Activated T-helper 1 cell treated with anti-CD3 and anti-CD28 coated beads, Interleukin-12 subunit alpha, Interleukin-12 subunit beta, Interleukin-2, Interleukin-4 antibody, amounts not matched to agents 30 ng/mL and 10 ng/mL and 1 ng/mL, durations not matched to agents 14 hours and 24 hours and 36 hours (primary cell): ENCODE measurements at regions of chr16 and their contacts with region 1.

Region 1: GRCh38 chr16:71808593-71809459 is at the start of gene AP1G1:
- DNase-seq: peak; percentile 89
- H3K4me3 Mint-ChIP-seq: peak within 1 kb of the TSS; percentile 96
- H3K27ac Mint-ChIP-seq: peak within 1 kb of the TSS; percentile 100
- H3K4me1 Mint-ChIP-seq: peaks cover 21% of the 10 kb centered on the region
- H3K27me3 Mint-ChIP-seq: no peaks in the 10 kb centered on the region
- total RNA-seq, gene AP1G1: 85.5 and 90.7 TPM in 2 replicates

Region 2: DNA sequence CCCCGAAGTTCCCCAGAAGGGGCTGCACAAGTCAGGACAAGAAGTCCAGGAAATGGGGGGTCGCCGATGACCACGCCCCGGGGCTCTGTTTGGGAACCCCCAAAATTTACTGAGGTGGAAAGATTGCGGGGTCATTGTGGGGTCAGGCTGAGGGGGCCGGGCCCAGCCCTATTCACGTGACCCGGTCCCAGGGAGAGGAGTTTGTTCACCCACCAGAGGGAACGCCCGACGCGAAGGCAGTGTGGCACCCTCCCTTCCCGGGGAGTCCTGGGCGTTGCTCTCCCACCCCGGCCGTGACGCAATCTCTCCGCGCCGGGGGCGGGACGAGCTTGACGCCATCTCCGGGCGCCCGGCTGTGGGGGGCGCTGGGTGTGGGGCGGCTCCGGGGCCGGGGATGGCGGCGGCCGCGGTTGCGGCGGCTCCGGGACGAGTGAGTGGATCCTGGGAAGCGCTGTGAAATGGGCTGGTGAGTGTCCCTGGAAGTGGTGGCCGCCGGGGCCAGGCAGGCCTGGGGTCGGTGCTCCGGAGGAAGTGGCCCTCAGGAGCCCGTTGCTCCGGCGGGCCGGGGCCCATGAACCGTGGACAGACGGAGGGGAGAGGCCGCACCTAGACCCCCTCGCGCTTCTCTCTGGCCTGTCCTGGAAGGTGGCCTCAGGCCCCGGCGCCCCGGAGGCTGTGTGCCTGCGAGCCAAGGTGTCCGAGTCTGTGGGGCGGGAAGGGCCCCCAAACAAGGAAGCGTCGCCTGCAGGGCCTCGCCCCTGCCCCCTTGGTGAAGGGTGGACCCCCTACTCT is 37.0 kb after region 1 on chr16 and contains the start of gene ATXN1L:
- intact Hi-C with region 1: loop called (anchors 1 kb)
- DNase-seq: peak; percentile 94
- H3K4me3 Mint-ChIP-seq: peak within 1 kb of the TSS; percentile 93
- H3K27ac Mint-ChIP-seq: peak within 1 kb of the TSS; percentile 94
- H3K4me1 Mint-ChIP-seq: peaks cover 52% of the 10 kb centered on the region
- H3K27me3 Mint-ChIP-seq: no peaks in the 10 kb centered on the region
- total RNA-seq, gene ATXN1L: 20.1 and 20.6 TPM in 2 replicates

Region 3: DNA sequence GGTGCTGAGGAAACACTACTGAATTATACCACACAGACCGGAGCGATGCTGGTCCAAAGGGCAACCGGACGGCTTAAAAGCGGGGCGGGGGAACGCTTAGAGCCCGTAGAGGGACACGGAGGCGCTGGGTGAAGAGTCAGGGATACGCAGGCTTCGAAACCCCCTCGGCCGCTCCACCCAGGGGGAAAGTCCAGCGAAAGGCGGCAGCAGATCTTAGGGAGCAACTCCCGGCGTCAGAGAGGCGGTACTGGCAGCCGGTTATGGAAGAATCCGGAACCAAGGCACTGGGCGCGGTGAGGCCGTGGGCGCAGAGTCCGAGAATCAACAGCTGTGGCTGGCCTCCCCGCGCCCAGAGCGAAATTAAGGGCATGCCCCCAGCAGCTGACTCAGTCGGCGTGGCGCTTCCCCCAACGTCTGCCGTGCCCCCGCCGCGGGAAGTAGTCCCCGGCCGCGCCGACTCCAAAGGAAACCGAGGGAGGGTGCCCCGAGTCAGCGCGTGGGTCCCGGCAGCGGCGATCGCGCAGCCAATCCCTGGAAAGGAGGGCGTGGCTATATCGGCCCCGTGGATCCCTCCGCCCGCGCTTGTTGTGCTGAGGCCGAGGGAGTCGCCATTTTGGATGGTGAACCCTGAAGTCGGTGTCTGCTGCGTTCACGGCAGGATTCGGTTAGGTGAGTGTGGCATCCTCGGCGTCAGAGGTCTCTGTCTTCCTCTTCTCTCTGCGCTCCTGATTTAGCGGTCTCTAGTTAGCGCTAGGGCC is 86.3 kb after region 1 on chr16 and contains the start of gene IST1:
- intact Hi-C with region 1: loop called (anchors 1 kb)
- DNase-seq: peak; percentile 98
- H3K4me3 Mint-ChIP-seq: peak within 1 kb of the TSS; percentile 90
- H3K27ac Mint-ChIP-seq: peak within 1 kb of the TSS; percentile 91
- H3K4me1 Mint-ChIP-seq: peaks cover 12% of the 10 kb centered on the region
- H3K27me3 Mint-ChIP-seq: no peaks in the 10 kb centered on the region
- total RNA-seq, gene IST1: 156 and 169 TPM in 2 replicates

Region 4: DNA sequence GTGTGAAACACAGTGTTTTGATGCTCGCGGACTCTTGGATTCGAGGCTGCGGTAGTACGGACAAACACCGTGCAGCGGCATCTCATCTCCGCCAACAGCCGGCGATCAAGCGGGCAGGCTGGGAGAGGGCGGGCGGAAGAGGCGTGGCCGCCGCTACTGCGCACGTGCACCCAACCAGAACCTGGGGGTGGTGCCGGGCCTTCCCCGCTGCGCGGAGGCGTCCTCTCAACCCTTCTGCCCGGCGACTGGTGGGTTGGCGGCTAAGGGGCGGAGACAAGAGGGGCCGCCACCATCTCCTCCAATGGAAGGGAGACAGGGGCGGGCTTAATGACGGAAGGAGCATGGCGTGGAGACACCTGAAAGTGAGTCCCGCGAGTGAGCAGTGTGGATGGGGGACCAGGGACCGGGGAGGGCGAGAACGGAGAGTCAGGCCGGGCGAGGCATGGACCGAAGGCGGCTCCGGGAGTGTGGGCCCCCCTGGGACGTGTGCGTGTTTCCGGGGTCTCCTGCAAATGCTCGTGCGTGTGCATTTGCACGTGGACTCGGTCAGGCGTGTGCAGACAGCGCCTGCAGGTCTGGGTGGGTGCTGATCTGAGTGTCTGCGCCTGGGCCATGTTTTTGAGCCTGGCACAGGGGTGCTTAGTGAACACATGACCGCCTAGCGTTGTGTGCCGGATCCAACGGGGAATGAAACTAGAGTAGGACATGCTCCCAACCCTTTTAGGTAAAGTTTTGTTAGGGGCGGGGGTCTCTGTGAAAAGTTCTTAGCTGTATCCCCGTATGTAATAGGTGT is 199.8 kb after region 1 on chr16 and contains the start of gene DHODH:
- intact Hi-C with region 1: loop called (anchors 1 kb)
- DNase-seq: peak; percentile 98
- H3K4me3 Mint-ChIP-seq: peak within 1 kb of the TSS; percentile 99
- H3K27ac Mint-ChIP-seq: peak within 1 kb of the TSS; percentile 99
- H3K4me1 Mint-ChIP-seq: peaks cover 16% of the 10 kb centered on the region
- H3K27me3 Mint-ChIP-seq: no peaks in the 10 kb centered on the region
- total RNA-seq, gene DHODH: 31.0 and 33.1 TPM in 2 replicates

Region 5: DNA sequence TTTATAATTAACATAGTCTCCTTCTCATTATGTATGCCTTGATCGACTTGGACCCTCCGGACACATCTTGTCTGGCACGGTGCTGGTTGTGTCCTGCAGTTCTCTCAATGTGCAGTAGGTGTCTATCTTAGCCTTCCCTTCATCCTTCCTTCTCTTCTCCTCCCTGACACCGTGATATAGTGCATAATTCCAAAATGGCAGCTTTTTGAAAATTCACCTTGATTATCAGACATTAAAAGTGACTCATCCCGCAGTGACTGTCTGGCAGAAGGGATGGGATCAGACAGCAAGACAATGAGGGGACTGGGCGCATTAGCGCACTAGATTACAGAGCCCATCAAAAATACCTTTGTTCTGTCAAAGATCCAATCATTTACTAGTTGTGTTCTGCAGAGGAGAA is 433.1 kb after region 1 on chr16:
- intact Hi-C with region 1: no loop called
- DNase-seq: no peak
- H3K4me3 Mint-ChIP-seq: no peak overlapping the region
- H3K27ac Mint-ChIP-seq: no peak overlapping the region
- H3K4me1 Mint-ChIP-seq: peaks cover 17% of the 10 kb centered on the region
- H3K27me3 Mint-ChIP-seq: peaks cover 10% of the 10 kb centered on the region